Activated CD4-positive, alpha-beta memory T cell treated with anti-CD3 and anti-CD28 coated beads for 36 hours (primary cell): ENCODE measurements at regions of chr10 and their contacts with region 1.

Region 1: DNA sequence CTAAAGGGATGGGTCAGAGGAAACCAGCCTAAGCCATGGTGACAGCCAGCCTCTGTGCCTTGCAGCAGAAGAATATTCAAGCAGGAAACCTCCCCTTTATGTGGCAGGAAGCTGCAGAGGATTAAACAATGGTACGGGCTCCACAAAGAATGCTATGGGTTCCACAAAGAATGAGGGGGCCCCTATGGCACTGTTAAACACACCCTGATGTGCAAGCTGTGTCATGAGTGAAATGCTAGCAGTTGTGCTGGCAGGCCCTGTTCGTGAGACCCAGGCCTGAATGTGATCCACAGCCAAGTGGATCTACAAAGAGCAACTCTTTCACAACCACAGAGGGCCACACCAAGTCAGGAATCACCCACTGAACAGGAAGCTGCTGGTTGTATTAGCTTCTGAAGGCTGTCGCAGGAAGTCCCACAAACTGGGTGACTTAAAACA is 68.9 kb downstream of the MYOF start:
- DNase-seq: peak; percentile 56
- H3K4me3 Mint-ChIP-seq: no peak overlapping the region
- H3K27ac Mint-ChIP-seq: peak overlapping the region; percentile 57
- H3K4me1 Mint-ChIP-seq: peaks cover 58% of the 10 kb centered on the region
- H3K27me3 Mint-ChIP-seq: no peaks in the 10 kb centered on the region

Region 2: DNA sequence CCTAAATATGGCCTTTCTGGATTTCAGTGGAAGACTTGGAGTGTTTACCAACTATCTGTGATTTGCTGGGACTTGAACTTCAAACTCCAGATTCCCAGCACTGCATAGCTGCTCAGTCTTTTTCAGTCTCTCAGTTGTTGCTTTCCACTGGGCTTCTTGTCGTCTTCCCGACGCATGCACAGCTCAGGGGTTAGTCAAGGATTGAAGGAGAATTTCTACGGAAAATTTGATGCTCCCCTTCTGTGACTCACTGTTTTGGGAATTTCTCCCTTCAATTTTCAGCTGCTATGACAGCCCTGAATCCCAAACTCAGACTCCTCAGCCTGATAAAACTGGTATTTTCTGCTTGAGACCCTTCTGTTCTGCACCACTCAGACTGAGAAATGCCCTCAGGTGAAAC is 247.9 kb before region 1 on chr10:
- CTCF ChIA-PET with region 1: no interaction called
- POLR2A ChIA-PET with region 1: no interaction called
- intact Hi-C with region 1: no loop called
- DNase-seq: no peak
- H3K4me3 Mint-ChIP-seq: no peak overlapping the region
- H3K27ac Mint-ChIP-seq: no peak overlapping the region
- H3K4me1 Mint-ChIP-seq: no peaks in the 10 kb centered on the region
- H3K27me3 Mint-ChIP-seq: peaks cover 12% of the 10 kb centered on the region

Region 3: GRCh38 chr10:93461807-93462178 is 48.5 kb after region 1 on chr10:
- CTCF ChIA-PET with region 1: no interaction called
- POLR2A ChIA-PET with region 1: no interaction called
- intact Hi-C with region 1: loop called (anchors 1 kb)
- DNase-seq: no peak
- H3K4me3 Mint-ChIP-seq: no peak overlapping the region
- H3K27ac Mint-ChIP-seq: peak overlapping the region; percentile 86
- H3K4me1 Mint-ChIP-seq: peaks cover 35% of the 10 kb centered on the region
- H3K27me3 Mint-ChIP-seq: no peaks in the 10 kb centered on the region